GM10248 (cell line): ENCODE measurements at regions of chr15 and their contacts with region 1.

Region 1: GRCh38 chr15:99104788-99105513 is at the start of gene SYNM:
- DNase-seq: peak; percentile 90
- CTCF ChIP-seq: peak; percentile 78

Region 2: DNA sequence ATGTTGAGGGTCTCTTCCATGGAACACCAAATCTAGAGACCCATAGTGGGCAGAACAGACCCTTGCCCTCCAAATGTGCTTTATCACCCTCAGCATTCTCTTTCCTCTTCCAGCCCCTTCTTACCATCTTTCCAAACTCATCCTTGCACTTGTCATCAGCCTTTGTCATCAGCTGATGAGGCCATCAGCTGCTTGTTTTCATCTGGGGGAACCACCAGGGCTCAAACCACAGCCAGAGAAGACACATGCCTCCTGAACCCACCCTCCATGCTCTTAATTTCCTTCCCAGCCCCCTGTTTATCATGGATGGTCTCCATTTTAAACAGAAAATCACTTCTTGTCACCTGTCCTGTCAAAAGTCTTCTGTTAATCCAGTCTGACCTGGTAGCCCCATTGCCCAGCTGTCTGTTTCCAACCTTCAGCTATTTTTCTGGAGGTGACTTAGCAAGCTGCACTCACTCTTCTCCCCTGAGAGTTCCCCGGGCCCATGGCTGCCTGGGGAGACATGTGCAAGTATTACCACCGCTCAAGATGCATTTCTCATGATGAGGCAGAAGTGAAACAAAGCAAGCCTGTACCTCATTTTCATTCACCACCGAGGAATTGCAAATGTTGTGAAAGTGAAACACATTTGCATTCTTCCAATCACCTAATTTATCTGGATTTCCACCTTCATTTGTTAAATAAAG is 14.8 kb before region 1 on chr15:
- CTCF ChIA-PET with region 1: interaction called, 33 read pairs
- POLR2A ChIA-PET with region 1: no interaction called
- DNase-seq: peak; percentile 78
- CTCF ChIP-seq: no peak

Region 3: DNA sequence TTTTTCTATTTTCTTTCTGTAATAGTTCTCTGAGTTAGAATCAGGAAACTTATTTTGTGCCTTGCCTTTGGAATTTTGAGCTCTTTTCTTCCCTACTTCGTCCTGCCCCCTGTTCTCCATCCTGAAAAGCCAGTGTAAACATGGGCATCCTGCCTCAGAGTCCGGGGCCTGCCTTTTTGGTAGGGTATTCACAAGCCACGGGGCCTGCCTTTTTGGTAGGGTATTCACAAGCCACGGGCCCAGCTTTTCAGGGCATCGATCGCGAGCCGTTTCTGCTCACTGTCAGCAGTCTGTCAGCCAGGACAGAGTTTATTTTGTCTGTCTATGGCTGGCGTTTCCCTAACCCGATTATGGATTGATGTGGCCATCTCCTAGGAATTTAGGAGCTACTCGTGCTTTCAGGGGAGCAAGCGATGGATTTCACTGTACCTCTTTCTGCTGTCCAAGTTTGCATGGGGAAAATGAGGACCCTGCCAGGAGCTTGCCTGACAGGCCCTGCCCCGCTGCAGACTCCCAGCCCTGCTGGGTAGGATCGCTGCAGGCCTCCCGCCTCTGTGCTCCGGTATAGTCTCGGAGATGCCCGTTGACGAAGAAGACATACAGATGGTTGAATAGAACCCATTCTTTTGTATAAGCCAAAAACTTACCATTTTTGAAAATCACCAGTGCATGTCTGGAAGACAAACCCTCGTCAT is 12.8 kb after region 1 on chr15:
- CTCF ChIA-PET with region 1: interaction called, 21 read pairs
- POLR2A ChIA-PET with region 1: no interaction called
- DNase-seq: no peak
- CTCF ChIP-seq: no peak

Region 4: DNA sequence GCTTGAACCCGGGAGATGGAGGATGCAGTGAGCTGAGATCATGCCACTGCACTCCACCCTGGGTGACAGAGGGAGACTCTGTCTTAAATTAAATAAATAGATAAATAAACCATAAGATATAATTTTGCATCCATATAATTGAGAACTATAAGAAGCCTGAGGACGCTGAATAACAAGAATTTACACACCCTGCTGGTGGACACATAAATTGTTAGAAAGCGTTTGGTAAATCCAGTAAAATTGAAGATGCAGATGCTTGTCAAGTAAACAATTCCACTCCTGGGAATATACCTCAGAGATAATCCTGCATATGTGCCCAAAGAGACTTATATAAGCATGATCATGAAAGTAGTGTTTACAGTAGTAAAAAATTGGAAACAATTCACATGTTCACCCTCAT is 102.7 kb after region 1 on chr15:
- CTCF ChIA-PET with region 1: interaction called, 57 read pairs
- POLR2A ChIA-PET with region 1: no interaction called
- DNase-seq: no peak
- CTCF ChIP-seq: no peak

Region 5: DNA sequence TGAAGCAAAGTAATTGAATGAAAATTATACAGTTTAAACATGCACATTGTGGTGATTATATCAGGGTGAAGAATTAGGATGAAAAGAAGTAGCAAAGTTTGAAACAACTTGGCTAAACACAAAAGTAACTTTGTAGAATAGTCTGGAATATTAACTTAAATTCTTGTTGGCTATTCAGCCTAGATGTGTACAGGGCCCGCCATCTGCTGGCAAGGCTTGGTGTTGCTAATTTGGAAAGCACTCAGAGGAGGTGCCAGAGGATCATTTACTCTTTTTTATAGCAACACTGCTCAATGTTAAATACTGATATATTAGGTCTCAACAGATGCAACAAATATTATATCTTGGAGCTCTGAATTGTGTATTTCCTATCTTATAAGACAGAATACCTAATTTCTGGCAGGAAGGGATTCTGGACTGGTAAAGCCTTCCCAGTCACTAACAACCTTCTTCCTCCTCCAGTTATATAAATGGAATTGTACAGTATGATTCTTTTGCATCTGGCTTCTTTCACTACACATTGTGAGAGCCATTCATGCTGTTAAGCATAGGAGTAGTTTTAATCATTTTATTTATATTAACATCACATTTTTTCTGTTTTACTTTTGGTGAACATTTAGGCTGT is 108.3 kb after region 1 on chr15:
- CTCF ChIA-PET with region 1: interaction called, 57 read pairs
- POLR2A ChIA-PET with region 1: no interaction called
- DNase-seq: peak; percentile 67
- CTCF ChIP-seq: peak; percentile 77